Panc1 (cell line): ENCODE measurements at regions of chr20 and their contacts with region 1.

Region 1: GRCh38 chr20:13771853-13772453 is 12.8 kb downstream of the ESF1 start:
- DNase-seq: no peak
- ATAC-seq: no peak
- H3K4me3 ChIP-seq: no peak overlapping the region
- H3K27ac ChIP-seq: no peak overlapping the region
- H3K4me1 ChIP-seq: no peaks in the 10 kb centered on the region
- H3K27me3 ChIP-seq: no peaks in the 10 kb centered on the region
- CTCF ChIP-seq: peak; percentile 57; the same call in 1 of the 2 replicates

Region 2: GRCh38 chr20:12970372-12970821 is 801.6 kb before region 1 on chr20:
- CTCF ChIA-PET with region 1: no interaction called
- POLR2A ChIA-PET with region 1: no interaction called
- in situ Hi-C with region 1: no loop called
- intact Hi-C with region 1: no loop called
- DNase-seq: peak; percentile 13
- ATAC-seq: no peak
- H3K4me3 ChIP-seq: no peak overlapping the region
- H3K27ac ChIP-seq: no peak overlapping the region
- H3K4me1 ChIP-seq: no peaks in the 10 kb centered on the region
- H3K27me3 ChIP-seq: no peaks in the 10 kb centered on the region
- CTCF ChIP-seq: peak; percentile 53; the same call in 1 of the 2 replicates

Region 3: DNA sequence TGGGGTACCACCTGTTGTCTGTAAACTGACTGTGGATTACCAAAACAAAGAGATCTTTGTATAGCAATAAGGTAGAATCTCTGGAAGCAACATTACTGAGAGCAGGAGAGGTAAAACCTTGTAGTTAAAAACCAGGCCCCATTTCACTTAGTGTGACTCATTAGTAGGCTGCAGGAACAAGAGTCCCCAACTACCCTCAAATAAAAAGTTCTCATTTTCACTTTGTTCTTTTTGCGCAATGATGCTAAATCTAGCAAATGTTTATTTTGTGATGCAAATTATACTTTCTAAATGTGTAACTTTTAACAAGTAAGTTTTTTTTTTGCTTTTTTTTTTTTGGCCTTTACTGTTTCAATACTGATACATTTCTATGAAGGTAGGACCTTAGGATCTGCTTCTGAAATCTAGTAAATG is 54.3 kb before region 1 on chr20:
- CTCF ChIA-PET with region 1: interaction called, 11 read pairs
- POLR2A ChIA-PET with region 1: no interaction called
- in situ Hi-C with region 1: no loop called
- intact Hi-C with region 1: no loop called
- DNase-seq: no peak
- ATAC-seq: no peak
- H3K4me3 ChIP-seq: no peak overlapping the region
- H3K27ac ChIP-seq: no peak overlapping the region
- H3K4me1 ChIP-seq: no peaks in the 10 kb centered on the region
- H3K27me3 ChIP-seq: no peaks in the 10 kb centered on the region
- CTCF ChIP-seq: no peak

Region 4: DNA sequence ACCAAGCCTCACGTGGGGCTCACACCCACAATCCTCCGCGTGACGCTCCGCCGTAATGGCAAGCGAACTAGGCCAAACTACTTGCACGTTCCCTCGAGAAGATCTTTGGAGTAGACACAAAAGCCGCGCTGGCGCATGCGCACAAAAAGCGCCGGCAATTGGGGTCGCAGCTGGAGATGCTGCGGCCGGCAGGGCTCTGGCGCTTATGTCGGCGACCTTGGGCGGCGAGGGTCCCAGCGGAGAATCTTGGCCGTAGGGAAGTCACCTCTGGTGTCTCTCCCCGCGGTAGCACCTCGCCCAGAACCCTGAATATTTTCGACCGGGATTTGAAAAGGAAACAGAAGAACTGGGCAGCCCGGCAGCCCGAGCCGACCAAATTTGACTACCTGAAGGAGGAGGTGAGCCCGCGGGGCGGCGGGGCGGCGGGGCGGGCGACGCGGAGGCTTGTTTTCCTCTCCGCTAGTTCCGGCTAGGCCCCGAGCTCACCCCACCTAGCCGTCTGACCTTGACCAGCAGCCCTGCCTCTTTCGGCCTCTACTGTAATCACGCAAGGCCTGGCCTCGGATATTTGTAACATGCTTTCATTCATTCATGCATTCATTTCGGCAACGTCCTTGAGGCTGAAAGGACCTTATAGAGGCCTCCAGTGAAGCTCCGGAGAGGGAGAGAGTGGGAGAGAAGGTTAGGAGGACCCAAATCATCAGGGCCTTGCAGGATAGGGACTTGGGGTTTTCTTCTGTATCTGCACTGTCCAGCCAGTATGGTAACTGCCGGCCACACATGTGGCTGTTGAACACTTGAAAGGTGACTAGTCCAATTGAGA is 13.2 kb after region 1 on chr20 and contains the starts of genes ESF1 and NDUFAF5:
- CTCF ChIA-PET with region 1: interaction called, 10 read pairs
- POLR2A ChIA-PET with region 1: interaction called, 4 read pairs
- in situ Hi-C with region 1: no loop called
- intact Hi-C with region 1: no loop called
- DNase-seq: peak; percentile 92
- ATAC-seq: peak; percentile 99
- H3K4me3 ChIP-seq: peak within 1 kb of the TSS; percentile 78 to 100
- H3K27ac ChIP-seq: peak within 1 kb of the TSS; percentile 90
- H3K4me1 ChIP-seq: peaks cover 12% of the 10 kb centered on the region
- H3K27me3 ChIP-seq: no peaks in the 10 kb centered on the region
- CTCF ChIP-seq: no peak
- total RNA-seq, gene ESF1: 26.4 TPM
- total RNA-seq, gene NDUFAF5: 23.0 TPM

Region 5: GRCh38 chr20:13857304-13857703 is 85.4 kb after region 1 on chr20:
- CTCF ChIA-PET with region 1: no interaction called
- POLR2A ChIA-PET with region 1: no interaction called
- in situ Hi-C with region 1: no loop called
- intact Hi-C with region 1: no loop called
- DNase-seq: no peak
- ATAC-seq: no peak
- H3K4me3 ChIP-seq: no peak overlapping the region
- H3K27ac ChIP-seq: no peak overlapping the region
- H3K4me1 ChIP-seq: no peaks in the 10 kb centered on the region
- H3K27me3 ChIP-seq: peaks cover 2% of the 10 kb centered on the region; the same call in 1 of the 2 replicates
- CTCF ChIP-seq: no peak

Region 6: GRCh38 chr20:13898011-13898612 is 126.2 kb after region 1 on chr20:
- CTCF ChIA-PET with region 1: no interaction called
- POLR2A ChIA-PET with region 1: no interaction called
- in situ Hi-C with region 1: no loop called
- intact Hi-C with region 1: no loop called
- DNase-seq: no peak
- ATAC-seq: peak; percentile 58; the same call in 1 of the 2 replicates
- H3K4me3 ChIP-seq: no peak overlapping the region
- H3K27ac ChIP-seq: no peak overlapping the region
- H3K4me1 ChIP-seq: no peaks in the 10 kb centered on the region
- H3K27me3 ChIP-seq: no peaks in the 10 kb centered on the region
- CTCF ChIP-seq: no peak; the same call in 1 of the 2 replicates